ENCODE measurements at regions of chr7 and their contacts with region 1.

Region 1: DNA sequence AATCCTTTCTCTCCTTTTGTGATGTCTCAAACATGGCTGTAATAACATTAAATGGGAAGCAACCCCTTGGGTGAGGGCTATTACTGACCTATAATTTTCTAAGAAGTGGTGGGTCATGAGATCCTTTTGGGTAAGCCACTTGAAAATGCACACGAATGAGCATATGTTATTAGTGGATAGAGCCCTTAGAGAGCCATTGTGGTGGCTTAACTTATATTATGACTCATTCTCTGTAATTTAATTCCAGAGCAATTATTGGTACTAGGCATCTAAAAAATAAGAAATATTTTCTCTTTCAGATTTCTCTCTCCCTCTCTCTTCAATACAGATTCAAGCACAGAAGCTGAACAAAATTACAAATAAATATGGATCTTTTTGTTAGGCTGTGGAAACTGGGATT is 1177.4 kb upstream of the PHF14 start:
- DNase-seq: no peak
- ATAC-seq: no peak
- H3K4me3 ChIP-seq: no peak overlapping the region
- H3K4me3 Mint-ChIP-seq: no peak overlapping the region
- H3K27ac ChIP-seq: no peak overlapping the region
- H3K27ac Mint-ChIP-seq: no peak overlapping the region
- H3K4me1 ChIP-seq: no peaks in the 10 kb centered on the region
- H3K4me1 Mint-ChIP-seq: no peaks in the 10 kb centered on the region
- H3K27me3 ChIP-seq: no peaks in the 10 kb centered on the region
- H3K27me3 Mint-ChIP-seq: no peaks in the 10 kb centered on the region
- CTCF ChIP-seq: no peak

Region 2: DNA sequence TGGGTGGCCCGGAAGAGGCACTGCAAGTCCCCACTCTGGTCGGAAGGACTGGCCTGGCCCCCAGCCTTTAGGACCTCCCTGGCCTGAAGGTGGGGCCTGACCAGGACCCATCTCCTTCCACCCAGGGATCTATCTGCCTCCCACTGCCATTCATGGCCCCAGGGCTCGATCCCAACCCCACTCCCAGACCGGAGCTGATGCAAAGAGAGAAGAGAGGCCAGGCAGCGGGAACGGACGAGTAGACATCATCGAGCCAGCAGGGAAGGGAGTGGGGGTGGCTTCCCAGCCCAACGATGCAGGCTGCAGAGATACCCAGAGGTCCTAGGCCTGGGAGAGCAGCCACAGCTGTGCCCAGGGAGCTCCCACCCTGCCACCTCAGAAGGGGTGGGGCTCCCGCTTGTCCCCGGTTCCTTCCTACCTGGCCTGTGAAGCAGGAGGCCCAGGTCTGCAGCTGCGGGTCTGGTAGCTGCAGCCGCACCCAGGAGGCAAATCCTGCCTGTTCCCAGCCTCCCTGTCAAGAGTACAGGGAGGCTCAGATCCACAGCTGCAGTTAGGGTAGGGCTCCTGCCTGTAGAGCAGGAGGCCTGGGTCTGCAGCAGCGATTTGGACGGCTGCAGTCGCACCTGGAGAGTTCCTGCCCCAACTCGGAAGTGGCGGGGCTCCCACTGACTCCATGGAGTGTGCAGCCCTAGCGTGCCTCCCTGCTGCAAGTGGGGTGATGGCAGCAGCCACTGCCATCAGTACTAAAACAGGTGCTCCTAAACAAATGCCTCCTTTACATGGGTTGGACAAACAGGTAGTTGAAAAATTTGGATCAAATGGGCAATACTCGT is 26.4 kb after region 1 on chr7:
- CTCF ChIA-PET with region 1: no interaction called
- POLR2A ChIA-PET with region 1: no interaction called
- intact Hi-C with region 1: loop called in 1 of 2 experiments (anchors 1 kb)
- DNase-seq: peak in 1 of 14 experiments; percentile 4
- ATAC-seq: no peak
- H3K4me3 ChIP-seq: no peak overlapping the region
- H3K4me3 Mint-ChIP-seq: no peak overlapping the region
- H3K27ac ChIP-seq: no peak overlapping the region
- H3K27ac Mint-ChIP-seq: no peak overlapping the region
- H3K4me1 ChIP-seq: no peaks in the 10 kb centered on the region
- H3K4me1 Mint-ChIP-seq: no peaks in the 10 kb centered on the region
- H3K27me3 ChIP-seq: no peaks in the 10 kb centered on the region
- H3K27me3 Mint-ChIP-seq: no peaks in the 10 kb centered on the region
- CTCF ChIP-seq: no peak

Region 3: DNA sequence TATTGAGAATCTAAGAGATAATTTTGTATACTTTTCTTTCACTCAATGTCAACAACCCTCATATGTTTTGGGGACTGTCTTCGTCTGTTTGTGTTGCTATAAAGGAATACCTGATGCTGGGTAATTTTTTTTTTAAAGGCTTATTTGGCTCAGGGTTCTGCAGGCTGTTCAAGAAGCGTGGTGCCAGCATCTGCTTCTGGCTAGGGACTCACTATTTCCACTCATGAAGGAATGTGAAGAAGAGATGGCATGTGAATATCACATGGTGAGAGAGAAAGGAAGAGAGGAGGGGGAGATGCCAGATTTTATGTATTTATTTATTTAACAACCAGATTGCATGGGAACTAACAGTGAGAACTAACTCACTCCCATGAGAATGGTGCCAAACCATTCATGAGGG is 350.0 kb after region 1 on chr7:
- CTCF ChIA-PET with region 1: no interaction called
- POLR2A ChIA-PET with region 1: no interaction called
- intact Hi-C with region 1: no loop called
- DNase-seq: no peak
- ATAC-seq: no peak
- H3K4me3 ChIP-seq: no peak overlapping the region
- H3K4me3 Mint-ChIP-seq: no peak overlapping the region
- H3K27ac ChIP-seq: no peak overlapping the region
- H3K27ac Mint-ChIP-seq: no peak overlapping the region
- H3K4me1 ChIP-seq: no peaks in the 10 kb centered on the region
- H3K4me1 Mint-ChIP-seq: no peaks in the 10 kb centered on the region
- H3K27me3 ChIP-seq: no peaks in the 10 kb centered on the region
- H3K27me3 Mint-ChIP-seq: no peaks in the 10 kb centered on the region
- CTCF ChIP-seq: no peak

Measured in CD4-positive, alpha-beta T cell (primary cell).